ENCODE measurements at regions of chr22 and their contacts with region 1.

Region 1: GRCh38 chr22:29883045-29883774 is at the start of gene MTMR3:
- DNase-seq: peak; percentile 95
- ATAC-seq: peak; percentile 83
- H3K4me3 Mint-ChIP-seq: peak within 1 kb of the TSS; percentile 89
- H3K27ac Mint-ChIP-seq: peak within 1 kb of the TSS; percentile 84
- H3K4me1 Mint-ChIP-seq: peaks cover 6% of the 10 kb centered on the region
- H3K27me3 Mint-ChIP-seq: no peaks in the 10 kb centered on the region
- total RNA-seq, gene MTMR3: 19.2 to 22.8 TPM

Region 2: DNA sequence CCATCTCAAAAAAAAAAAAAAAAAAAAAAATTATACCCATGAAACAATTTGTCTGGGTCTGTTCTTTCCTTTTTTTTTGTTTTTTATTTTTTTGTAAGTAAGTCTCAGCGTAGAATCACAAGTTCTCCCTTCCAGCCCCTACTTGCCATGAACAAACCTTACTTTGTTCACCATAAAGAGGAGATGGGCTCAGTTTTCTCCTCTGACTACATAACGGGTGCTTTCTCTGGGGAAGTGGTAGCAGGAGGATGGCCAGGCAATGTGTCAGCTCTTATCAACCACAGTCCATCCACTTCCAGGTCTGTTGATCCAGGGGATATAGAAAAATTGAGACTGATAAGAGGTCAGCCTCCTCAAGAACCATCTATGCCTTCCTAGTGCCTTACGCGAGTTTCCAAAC is 56.1 kb before region 1 on chr22:
- CTCF ChIA-PET with region 1: no interaction called
- POLR2A ChIA-PET with region 1: no interaction called
- intact Hi-C with region 1: no loop called
- DNase-seq: no peak
- ATAC-seq: no peak
- H3K4me3 Mint-ChIP-seq: no peak overlapping the region
- H3K27ac Mint-ChIP-seq: no peak overlapping the region
- H3K4me1 Mint-ChIP-seq: no peaks in the 10 kb centered on the region
- H3K27me3 Mint-ChIP-seq: no peaks in the 10 kb centered on the region

Region 3: DNA sequence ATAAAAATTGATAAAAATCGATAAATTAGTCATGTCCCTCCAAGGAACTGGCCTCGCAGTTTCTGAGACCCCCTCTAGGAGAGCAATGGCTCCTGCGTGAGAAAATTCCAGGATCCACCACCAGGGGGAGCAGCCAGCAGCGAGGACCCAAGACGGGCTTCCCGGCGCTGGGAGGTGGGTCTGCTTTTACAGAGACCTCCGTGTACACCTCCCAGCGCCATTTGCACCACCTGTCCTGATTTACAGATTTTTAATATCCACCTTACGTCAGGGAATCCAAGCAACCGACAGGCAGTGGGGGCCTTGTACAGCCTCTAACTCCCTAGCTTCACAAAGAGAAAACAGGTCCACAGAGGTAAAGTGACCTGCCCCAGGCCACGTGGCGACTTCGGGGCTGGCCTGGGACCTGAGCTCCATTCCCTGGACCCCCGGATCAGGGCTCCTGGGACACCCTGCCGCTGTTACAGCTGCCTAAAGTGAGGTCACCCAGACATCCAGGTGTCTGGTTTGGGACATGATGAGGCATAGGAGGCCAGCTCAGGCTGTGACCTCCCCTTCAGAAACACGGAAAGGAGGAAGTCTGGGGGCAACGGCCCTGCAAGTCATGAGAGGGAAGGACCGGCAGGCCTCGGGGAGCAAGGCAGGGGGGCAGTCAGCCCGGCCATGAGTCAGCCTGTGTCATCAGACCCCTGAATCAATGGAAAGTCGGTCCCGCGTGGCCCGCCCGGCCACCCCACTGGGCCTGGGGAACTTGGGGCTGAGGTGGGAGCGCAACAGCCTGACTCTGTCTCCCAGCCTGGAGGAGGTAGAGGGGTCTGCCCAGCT is 379.9 kb after region 1 on chr22:
- CTCF ChIA-PET with region 1: no interaction called
- POLR2A ChIA-PET with region 1: no interaction called
- intact Hi-C with region 1: loop called in 1 of 2 experiments (anchors 10 kb)
- DNase-seq: peak; percentile 88
- ATAC-seq: no peak
- H3K4me3 Mint-ChIP-seq: peak overlapping the region; percentile 62
- H3K27ac Mint-ChIP-seq: peak overlapping the region; percentile 51
- H3K4me1 Mint-ChIP-seq: peaks cover 33% of the 10 kb centered on the region
- H3K27me3 Mint-ChIP-seq: no peaks in the 10 kb centered on the region